ENCODE measurements at regions of chr6 and their contacts with region 1.

Region 1: GRCh38 chr6:144008120-144008811 is at the start of gene PLAGL1:
- DNase-seq: peak; percentile 74 to 87 (median 79)
- ATAC-seq: peak; percentile 86 to 97 (median 96)
- H3K4me3 ChIP-seq: peak within 1 kb of the TSS; percentile 28 to 78 (median 62)
- H3K27ac ChIP-seq: peak within 1 kb of the TSS in 11 of 12 donors; percentile 27 to 79 (median 73)
- H3K4me1 ChIP-seq: peaks cover 0 to 4% (median 0%) of the 10 kb centered on the region in 12 donors
- H3K27me3 ChIP-seq: no peaks in the 10 kb centered on the region
- CTCF ChIP-seq: no peak
- POLR2A ChIP-seq: peak in 1 of 2 donors; percentile 78
- total RNA-seq, gene PLAGL1: 6.6 to 27.3 (median 10.0) TPM

Region 2: GRCh38 chr6:143961886-143962873 is 46.1 kb before region 1 on chr6:
- intact Hi-C with region 1: loop called in 2 of 10 experiments (anchors 5 to 10 kb)
- DNase-seq: no peak
- ATAC-seq: peak in 2 of 4 donors; percentile 12 to 15
- H3K4me3 ChIP-seq: no peak overlapping the region
- H3K27ac ChIP-seq: peak overlapping the region in 10 of 12 donors; percentile 4 to 47 (median 27)
- H3K4me1 ChIP-seq: peaks cover 0 to 49% (median 25%) of the 10 kb centered on the region in 12 donors
- H3K27me3 ChIP-seq: no peaks in the 10 kb centered on the region
- CTCF ChIP-seq: peak in 8 of 12 donors; percentile 19 to 53 (median 40)
- POLR2A ChIP-seq: no peak

Region 3: DNA sequence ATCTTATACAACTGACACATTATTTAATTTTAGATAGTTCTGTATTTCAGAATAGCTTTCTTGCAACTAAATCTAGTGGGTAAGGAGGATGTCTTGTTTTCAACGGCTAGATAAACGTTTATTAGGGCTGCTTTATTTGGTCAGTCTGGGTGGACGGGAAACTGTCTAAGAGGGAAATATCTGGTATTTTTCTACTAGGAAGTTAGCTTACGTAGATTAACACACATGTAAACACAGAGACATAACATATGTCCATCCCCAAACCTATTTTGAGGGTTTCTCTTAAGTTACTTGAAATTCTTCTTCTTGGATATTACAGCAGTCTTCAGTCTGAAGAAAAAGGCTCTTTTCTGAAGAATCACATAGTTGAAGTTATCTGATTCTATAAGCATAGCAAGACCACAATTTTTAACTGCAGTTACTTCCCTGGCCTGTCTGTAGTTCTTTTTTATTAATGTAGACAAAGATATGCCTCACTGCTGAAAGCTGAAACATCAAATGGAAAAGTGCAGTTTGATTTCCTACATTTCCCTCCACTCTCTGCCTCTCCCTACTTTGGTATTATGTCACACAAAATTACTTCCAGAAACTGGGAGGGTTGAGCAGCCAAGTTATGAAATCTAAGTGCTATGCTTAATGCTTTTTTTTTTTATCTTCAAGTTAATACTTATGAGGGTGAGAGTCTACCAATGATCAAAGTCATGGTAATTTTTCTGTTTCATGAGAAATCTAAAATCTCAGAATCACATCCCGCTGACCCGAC is 37.6 kb before region 1 on chr6:
- intact Hi-C with region 1: loop called in 1 of 10 experiments (anchors 5 kb)
- DNase-seq: no peak
- ATAC-seq: peak in 2 of 4 donors; percentile 60 to 67
- H3K4me3 ChIP-seq: no peak overlapping the region
- H3K27ac ChIP-seq: peak overlapping the region in 5 of 12 donors; percentile 3 to 49 (median 31)
- H3K4me1 ChIP-seq: peaks cover 0 to 45% (median 0%) of the 10 kb centered on the region in 12 donors
- H3K27me3 ChIP-seq: no peaks in the 10 kb centered on the region
- CTCF ChIP-seq: no peak
- POLR2A ChIP-seq: no peak

Measured in heart left ventricle (tissue), 16 donors.